OCI-LY7 (cell line): ENCODE measurements at regions of chr4 and their contacts with region 1.

Region 1: DNA sequence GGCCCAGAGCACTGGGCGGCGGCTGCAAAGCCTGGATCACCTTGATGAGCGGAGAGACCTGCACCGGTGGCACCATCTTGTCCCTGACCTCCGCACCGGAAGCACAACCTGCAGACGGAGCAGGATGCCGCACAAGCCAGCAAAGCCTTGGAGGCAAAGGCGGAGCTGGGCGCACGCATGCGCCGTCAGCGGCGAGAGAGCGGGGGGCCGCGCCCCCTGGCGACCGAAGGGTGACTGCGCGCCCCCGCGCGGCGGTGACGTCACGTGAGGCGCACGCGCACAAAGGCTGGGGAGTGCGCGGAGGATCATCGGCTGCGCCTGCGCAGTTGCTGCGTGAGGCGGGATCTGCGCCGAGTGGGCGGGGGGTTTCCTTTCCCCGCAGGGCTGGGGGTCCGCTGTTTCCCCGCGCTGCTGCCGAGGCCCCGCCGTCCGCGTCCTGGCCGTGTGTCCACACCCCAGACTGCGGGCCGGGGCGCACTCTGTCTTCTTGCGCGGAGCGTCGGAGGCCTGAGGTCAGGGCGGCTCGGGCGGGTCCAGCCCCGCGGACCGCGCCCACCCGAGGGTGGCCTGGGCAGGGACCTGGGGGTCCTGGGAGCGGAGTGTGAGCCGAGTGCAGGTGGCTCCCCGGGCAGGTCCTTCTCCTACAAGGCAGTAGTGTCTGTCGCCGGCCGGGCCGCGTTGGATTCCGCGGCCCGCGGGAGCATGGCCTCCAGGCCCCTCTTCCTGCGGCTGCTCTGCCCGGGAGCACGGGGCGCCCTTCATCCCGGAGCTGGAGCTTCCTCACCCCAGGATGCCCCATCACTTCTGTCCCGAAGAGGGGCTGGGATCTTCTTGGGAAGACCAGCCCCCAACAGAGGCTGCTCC is at the starts of genes ATP5ME and MYL5:
- DNase-seq: peak; percentile 98
- H3K4me3 ChIP-seq: peak within 1 kb of the TSS; percentile 98
- H3K27ac ChIP-seq: peak within 1 kb of the TSS; percentile 94
- H3K4me1 ChIP-seq: peaks cover 46% of the 10 kb centered on the region
- CTCF ChIP-seq: peak; percentile 85
- total RNA-seq, gene ATP5ME: 388 and 420 TPM in 2 replicates
- total RNA-seq, gene MYL5: 23.0 and 24.4 TPM in 2 replicates

Region 2: GRCh38 chr4:242121-242848 is 432.1 kb before region 1 on chr4:
- CTCF ChIA-PET with region 1: no interaction called
- POLR2A ChIA-PET with region 1: no interaction called
- intact Hi-C with region 1: loop called (anchors 1 kb)
- DNase-seq: peak; percentile 84
- H3K4me3 ChIP-seq: peak overlapping the region; percentile 34
- H3K27ac ChIP-seq: no peak overlapping the region
- H3K4me1 ChIP-seq: no peaks in the 10 kb centered on the region
- CTCF ChIP-seq: peak; percentile 93

Region 3: DNA sequence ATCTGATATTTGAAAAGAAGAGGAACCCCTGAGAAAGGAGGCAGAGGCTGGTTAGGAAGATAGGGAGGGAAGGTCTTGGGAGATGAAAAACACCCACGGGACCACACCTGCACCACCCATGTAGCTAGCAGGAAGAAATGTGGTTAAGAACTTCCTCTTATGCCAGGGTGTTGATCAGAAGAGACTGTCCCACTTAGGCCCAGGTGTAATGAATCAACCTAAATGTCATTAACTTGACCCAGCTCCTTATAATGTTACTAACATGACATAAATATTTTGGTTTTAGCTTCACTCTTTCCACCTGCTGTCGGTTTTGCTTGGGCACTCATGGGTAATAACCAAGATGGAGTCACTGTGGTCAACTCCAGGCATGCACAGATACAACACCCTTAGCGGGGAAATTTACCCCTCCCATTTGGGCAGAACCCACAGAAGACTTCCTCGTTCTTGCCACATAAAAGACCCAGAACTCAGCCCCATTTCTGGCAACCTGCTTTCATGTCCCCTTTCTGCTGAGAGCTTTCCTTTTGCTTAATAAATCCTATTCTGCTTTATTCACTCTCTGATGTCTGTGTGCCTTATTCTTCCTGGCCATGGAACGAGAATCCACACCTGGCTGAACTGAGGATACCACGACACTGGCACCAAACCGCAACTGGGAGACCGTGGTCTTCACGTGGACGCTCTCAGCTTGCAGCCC is 289.9 kb before region 1 on chr4:
- CTCF ChIA-PET with region 1: no interaction called
- POLR2A ChIA-PET with region 1: no interaction called
- intact Hi-C with region 1: loop called (anchors 1 kb)
- DNase-seq: peak; percentile 97
- H3K4me3 ChIP-seq: peak overlapping the region; percentile 31
- H3K27ac ChIP-seq: peak overlapping the region; percentile 95
- H3K4me1 ChIP-seq: peaks cover 29% of the 10 kb centered on the region
- CTCF ChIP-seq: no peak

Region 4: DNA sequence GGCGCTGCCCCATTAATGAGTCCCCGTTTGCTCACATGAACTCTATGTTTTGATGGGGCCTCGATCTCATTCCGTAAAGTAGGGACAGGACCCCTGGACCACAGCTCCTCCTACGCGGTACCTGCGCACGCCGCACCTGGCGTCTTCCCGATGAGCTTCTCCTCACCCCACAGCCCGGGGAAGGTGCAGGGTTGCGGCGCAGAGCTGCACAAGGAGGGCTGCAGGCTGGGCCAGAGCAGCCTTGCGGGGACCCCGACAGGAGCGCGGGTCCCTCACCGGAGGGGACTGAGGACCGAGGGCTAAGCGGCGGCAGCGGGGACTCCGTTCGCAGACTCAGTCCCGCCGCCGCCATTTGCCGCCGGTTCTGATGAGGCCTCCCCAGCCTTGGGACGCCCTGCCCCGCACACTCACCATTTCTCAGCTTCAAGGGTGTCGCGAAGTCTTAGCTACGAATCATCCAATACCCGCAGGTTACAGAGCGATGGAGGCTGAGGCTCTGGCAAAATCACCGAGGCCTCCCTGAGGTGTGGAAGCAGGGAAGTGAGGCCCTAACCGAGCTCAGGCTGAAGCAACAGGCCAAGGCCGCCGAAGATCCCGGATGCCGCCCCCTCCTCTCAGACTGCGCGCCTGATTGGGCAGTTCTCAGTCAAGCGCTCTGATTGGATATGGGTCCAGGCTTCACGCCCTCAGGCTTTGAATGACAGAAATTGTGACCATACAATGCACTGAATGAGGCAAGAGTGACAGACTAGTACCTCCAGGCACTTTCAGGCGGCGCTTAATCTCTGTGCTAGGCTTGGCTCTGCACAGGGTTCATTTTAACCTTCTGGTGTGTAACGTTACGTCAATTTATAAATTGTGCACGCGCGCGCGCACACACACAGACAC is 200.6 kb before region 1 on chr4:
- CTCF ChIA-PET with region 1: no interaction called
- POLR2A ChIA-PET with region 1: no interaction called
- intact Hi-C with region 1: loop called (anchors 10 kb)
- DNase-seq: peak; percentile 99
- H3K4me3 ChIP-seq: peak overlapping the region; percentile 91
- H3K27ac ChIP-seq: peak overlapping the region; percentile 90
- H3K4me1 ChIP-seq: peaks cover 30% of the 10 kb centered on the region
- CTCF ChIP-seq: no peak

Region 5: GRCh38 chr4:781493-782216 is 107.3 kb after region 1 on chr4:
- CTCF ChIA-PET with region 1: no interaction called
- POLR2A ChIA-PET with region 1: no interaction called
- intact Hi-C with region 1: loop called (anchors 2 kb)
- DNase-seq: peak; percentile 98
- H3K4me3 ChIP-seq: peak overlapping the region; percentile 97
- H3K27ac ChIP-seq: peak overlapping the region; percentile 66
- H3K4me1 ChIP-seq: peaks cover 38% of the 10 kb centered on the region
- CTCF ChIP-seq: no peak